Naive thymus-derived CD4-positive, alpha-beta T cell (primary cell): ENCODE measurements at regions of chr12 and their contacts with region 1.

Region 1: DNA sequence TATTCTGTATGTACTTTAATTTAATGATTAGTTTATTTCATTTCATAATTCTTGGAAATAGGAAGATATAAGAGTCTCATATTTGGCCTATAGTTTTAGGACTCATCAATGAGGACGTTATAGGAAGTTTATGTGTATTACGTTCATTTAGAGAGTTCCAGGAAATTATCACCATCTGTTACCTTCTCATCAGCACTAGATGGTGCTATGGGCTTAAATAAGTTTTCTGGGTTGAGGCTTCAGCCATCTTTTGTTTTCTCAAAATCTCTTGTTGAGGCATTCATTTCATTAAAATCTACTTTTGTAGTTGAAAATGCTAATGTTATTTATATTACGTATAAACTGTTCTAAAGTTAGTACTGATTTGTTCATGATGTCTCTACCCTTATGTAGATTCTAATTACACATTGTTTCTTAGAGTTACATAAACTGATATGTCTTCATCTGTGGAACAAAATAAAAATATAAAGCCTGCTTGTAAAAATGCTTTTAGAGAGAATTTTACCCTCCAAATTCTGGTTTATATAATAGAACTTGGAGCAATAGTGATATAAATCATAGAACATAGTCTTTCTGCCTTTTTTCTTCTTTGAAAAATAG is 89.2 kb downstream of the CFAP54 start:
- DNase-seq: peak in 7 of 9 donors; percentile 26 to 62 (median 52)
- ATAC-seq: peak; percentile 84
- H3K4me3 ChIP-seq: no peak overlapping the region
- H3K4me3 Mint-ChIP-seq: no peak overlapping the region
- H3K27ac ChIP-seq: no peak overlapping the region
- H3K27ac Mint-ChIP-seq: no peak overlapping the region
- H3K4me1 ChIP-seq: no peaks in the 10 kb centered on the region
- H3K4me1 Mint-ChIP-seq: peaks cover 0 to 3% (median 0%) of the 10 kb centered on the region in 7 donors
- H3K27me3 ChIP-seq: no peaks in the 10 kb centered on the region
- H3K27me3 Mint-ChIP-seq: peaks cover 0 to 12% (median 5%) of the 10 kb centered on the region in 5 donors

Region 2: DNA sequence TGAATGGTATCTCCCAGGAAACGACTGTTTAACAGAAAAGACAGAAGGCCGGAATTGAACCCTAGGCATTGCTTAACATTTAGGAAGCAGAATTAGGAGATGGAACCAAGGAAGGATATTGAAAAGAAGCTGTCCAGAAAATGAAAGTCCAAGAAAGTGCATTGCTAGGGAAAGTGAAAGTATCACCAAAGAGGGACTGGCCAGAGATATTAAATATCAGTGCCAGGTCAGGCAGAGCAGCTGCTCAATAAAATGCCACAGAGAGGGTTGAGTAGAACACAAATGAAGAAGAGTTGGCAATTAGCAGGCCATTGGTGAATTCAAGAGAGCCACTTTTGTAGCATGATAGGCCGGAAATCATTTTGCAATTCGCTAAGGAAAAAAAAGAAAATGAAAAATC is 12.3 kb after region 1 on chr12:
- CTCF ChIA-PET with region 1: no interaction called
- POLR2A ChIA-PET with region 1: no interaction called
- intact Hi-C with region 1: no loop called
- DNase-seq: no peak
- ATAC-seq: no peak
- H3K4me3 ChIP-seq: no peak overlapping the region
- H3K4me3 Mint-ChIP-seq: no peak overlapping the region
- H3K27ac ChIP-seq: no peak overlapping the region
- H3K27ac Mint-ChIP-seq: no peak overlapping the region
- H3K4me1 ChIP-seq: no peaks in the 10 kb centered on the region
- H3K4me1 Mint-ChIP-seq: no peaks in the 10 kb centered on the region
- H3K27me3 ChIP-seq: no peaks in the 10 kb centered on the region
- H3K27me3 Mint-ChIP-seq: peaks cover 0 to 33% (median 13%) of the 10 kb centered on the region in 5 donors

Region 3: DNA sequence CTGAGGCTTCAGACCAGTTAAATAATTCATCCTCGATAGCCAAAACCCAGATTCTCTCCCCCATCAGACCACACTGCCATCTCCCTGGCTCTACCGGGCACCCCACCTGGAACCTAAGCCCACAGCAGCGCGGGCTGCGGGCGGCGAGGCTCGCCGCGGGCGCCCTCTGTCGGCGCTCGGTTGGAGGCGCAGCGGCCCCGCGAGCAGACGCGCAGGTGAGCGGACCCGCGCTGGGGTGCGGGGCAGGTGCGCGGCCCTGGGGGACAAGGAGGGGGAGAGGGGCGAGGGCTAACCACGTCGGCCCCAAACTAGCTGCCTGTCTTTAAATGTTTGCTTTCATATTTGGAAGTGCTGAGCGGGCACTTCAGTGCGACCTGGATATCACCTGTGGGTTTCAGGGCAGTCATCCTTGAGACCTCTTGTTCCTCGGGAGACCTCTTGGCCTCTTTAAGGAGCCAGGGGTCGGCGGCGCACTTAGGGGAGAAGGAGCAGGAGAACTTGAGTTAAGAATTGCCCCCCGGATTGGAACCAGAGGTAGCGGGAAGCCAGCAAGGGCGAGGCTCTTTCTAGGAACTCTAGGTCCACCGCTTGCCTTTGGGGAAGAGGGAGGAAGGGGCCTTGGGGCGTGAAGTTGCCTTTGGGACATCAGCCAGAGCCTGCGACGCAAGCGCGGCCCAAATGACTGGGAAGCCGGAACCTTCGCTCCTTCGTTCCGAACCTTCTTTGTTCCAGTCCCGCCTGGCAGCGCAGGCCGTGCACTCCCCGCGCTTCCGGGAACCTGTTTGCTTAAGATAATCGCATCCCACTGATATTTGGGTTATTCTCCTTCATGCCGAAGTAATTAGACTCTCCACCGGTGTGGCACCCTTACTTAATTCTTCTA is 407.1 kb after region 1 on chr12:
- CTCF ChIA-PET with region 1: interaction called, 6 read pairs
- POLR2A ChIA-PET with region 1: no interaction called
- intact Hi-C with region 1: loop called (anchors 1 kb)
- DNase-seq: peak in 8 of 9 donors; percentile 23 to 61 (median 48)
- ATAC-seq: peak; percentile 89
- H3K4me3 ChIP-seq: peak overlapping the region; percentile 52
- H3K4me3 Mint-ChIP-seq: peak overlapping the region; percentile 60 to 90 (median 84)
- H3K27ac ChIP-seq: no peak overlapping the region
- H3K27ac Mint-ChIP-seq: peak overlapping the region in 1 of 9 donors; percentile 49
- H3K4me1 ChIP-seq: peaks cover 0 to 4% of the 10 kb centered on the region in 2 donors
- H3K4me1 Mint-ChIP-seq: peaks cover 7 to 9% (median 8%) of the 10 kb centered on the region in 7 donors
- H3K27me3 ChIP-seq: no peaks in the 10 kb centered on the region
- H3K27me3 Mint-ChIP-seq: peaks cover 13 to 47% (median 33%) of the 10 kb centered on the region in 5 donors

Region 4: DNA sequence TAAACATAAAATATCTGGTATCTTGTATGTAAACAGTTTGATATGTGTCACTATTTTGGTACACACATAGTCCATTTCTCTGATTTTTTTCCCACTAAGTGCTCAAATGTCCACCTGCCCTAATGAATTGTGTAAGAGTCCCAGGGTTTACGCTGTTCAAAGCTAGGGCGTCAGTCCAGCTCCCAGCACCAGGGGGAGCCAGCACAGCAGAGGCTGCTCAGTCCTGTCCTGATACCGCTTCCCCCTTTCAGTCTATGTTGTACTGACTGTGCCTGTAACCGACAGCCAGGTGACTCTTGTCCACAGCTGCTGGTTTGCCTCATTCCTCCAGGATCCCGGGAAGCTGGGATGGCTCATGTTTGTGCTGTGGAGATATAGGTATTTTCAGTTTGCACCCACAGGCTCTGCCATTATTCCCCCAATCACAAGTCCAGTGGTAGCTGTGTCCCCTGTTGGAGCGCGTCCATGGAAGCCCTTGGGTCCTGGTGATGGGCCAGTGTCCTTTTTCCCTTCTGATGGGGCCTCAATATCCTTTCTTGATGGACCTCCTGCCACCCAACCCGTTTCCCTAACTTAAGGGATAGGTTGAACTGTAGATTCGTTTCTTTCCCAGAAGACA is 570.4 kb after region 1 on chr12:
- CTCF ChIA-PET with region 1: no interaction called
- POLR2A ChIA-PET with region 1: no interaction called
- intact Hi-C with region 1: loop called in 1 of 2 experiments (anchors 5 kb)
- DNase-seq: peak; percentile 4 to 49 (median 10)
- ATAC-seq: peak; percentile 85
- H3K4me3 ChIP-seq: no peak overlapping the region
- H3K4me3 Mint-ChIP-seq: no peak overlapping the region
- H3K27ac ChIP-seq: no peak overlapping the region
- H3K27ac Mint-ChIP-seq: no peak overlapping the region
- H3K4me1 ChIP-seq: no peaks in the 10 kb centered on the region
- H3K4me1 Mint-ChIP-seq: peaks cover 0 to 5% (median 0%) of the 10 kb centered on the region in 7 donors
- H3K27me3 ChIP-seq: no peaks in the 10 kb centered on the region
- H3K27me3 Mint-ChIP-seq: peaks cover 7 to 22% (median 14%) of the 10 kb centered on the region in 5 donors

Region 5: GRCh38 chr12:97308576-97309198 is 730.1 kb after region 1 on chr12:
- CTCF ChIA-PET with region 1: interaction called, 42 read pairs
- POLR2A ChIA-PET with region 1: no interaction called
- intact Hi-C with region 1: loop called (anchors 1 kb)
- DNase-seq: peak in 7 of 9 donors; percentile 14 to 58 (median 54)
- ATAC-seq: peak; percentile 66
- H3K4me3 ChIP-seq: no peak overlapping the region
- H3K4me3 Mint-ChIP-seq: no peak overlapping the region
- H3K27ac ChIP-seq: no peak overlapping the region
- H3K27ac Mint-ChIP-seq: no peak overlapping the region
- H3K4me1 ChIP-seq: no peaks in the 10 kb centered on the region
- H3K4me1 Mint-ChIP-seq: peaks cover 0 to 2% (median 0%) of the 10 kb centered on the region in 7 donors
- H3K27me3 ChIP-seq: no peaks in the 10 kb centered on the region
- H3K27me3 Mint-ChIP-seq: peaks cover 5 to 25% (median 17%) of the 10 kb centered on the region in 5 donors

Region 6: GRCh38 chr12:97404543-97404942 is 825.9 kb after region 1 on chr12:
- CTCF ChIA-PET with region 1: no interaction called
- POLR2A ChIA-PET with region 1: no interaction called
- intact Hi-C with region 1: loop called (anchors 1 to 10 kb)
- DNase-seq: no peak
- ATAC-seq: no peak
- H3K4me3 ChIP-seq: no peak overlapping the region
- H3K4me3 Mint-ChIP-seq: no peak overlapping the region
- H3K27ac ChIP-seq: no peak overlapping the region
- H3K27ac Mint-ChIP-seq: no peak overlapping the region
- H3K4me1 ChIP-seq: no peaks in the 10 kb centered on the region
- H3K4me1 Mint-ChIP-seq: no peaks in the 10 kb centered on the region
- H3K27me3 ChIP-seq: no peaks in the 10 kb centered on the region
- H3K27me3 Mint-ChIP-seq: peaks cover 0 to 5% (median 0%) of the 10 kb centered on the region in 5 donors

Region 7: GRCh38 chr12:97960754-97961608 is 1382.4 kb after region 1 on chr12:
- CTCF ChIA-PET with region 1: no interaction called
- POLR2A ChIA-PET with region 1: no interaction called
- intact Hi-C with region 1: loop called in 1 of 2 experiments (anchors 2 kb)
- DNase-seq: peak in 1 of 9 donors; percentile 7
- ATAC-seq: no peak
- H3K4me3 ChIP-seq: no peak overlapping the region
- H3K4me3 Mint-ChIP-seq: no peak overlapping the region
- H3K27ac ChIP-seq: no peak overlapping the region
- H3K27ac Mint-ChIP-seq: no peak overlapping the region
- H3K4me1 ChIP-seq: no peaks in the 10 kb centered on the region
- H3K4me1 Mint-ChIP-seq: no peaks in the 10 kb centered on the region
- H3K27me3 ChIP-seq: no peaks in the 10 kb centered on the region
- H3K27me3 Mint-ChIP-seq: no peaks in the 10 kb centered on the region